CD8-positive, alpha-beta T cell (primary cell): ENCODE measurements at regions of chr4 and their contacts with region 1.

Region 1: GRCh38 chr4:83284193-83285054 is at the start of gene COQ2:
- DNase-seq: peak; percentile 90 to 97 (median 95)
- ATAC-seq: peak; percentile 89
- H3K4me3 ChIP-seq: peak within 1 kb of the TSS; percentile 56 to 78
- H3K4me3 Mint-ChIP-seq: peak within 1 kb of the TSS; percentile 97
- H3K27ac ChIP-seq: peak within 1 kb of the TSS; percentile 71 to 84
- H3K27ac Mint-ChIP-seq: peak within 1 kb of the TSS; percentile 98
- H3K4me1 ChIP-seq: peaks cover 17% of the 10 kb centered on the region
- H3K4me1 Mint-ChIP-seq: peaks cover 35% of the 10 kb centered on the region
- H3K27me3 ChIP-seq: no peaks in the 10 kb centered on the region
- H3K27me3 Mint-ChIP-seq: no peaks in the 10 kb centered on the region
- CTCF ChIP-seq: no peak
- total RNA-seq, gene COQ2: 9.0 to 9.8 TPM

Region 2: DNA sequence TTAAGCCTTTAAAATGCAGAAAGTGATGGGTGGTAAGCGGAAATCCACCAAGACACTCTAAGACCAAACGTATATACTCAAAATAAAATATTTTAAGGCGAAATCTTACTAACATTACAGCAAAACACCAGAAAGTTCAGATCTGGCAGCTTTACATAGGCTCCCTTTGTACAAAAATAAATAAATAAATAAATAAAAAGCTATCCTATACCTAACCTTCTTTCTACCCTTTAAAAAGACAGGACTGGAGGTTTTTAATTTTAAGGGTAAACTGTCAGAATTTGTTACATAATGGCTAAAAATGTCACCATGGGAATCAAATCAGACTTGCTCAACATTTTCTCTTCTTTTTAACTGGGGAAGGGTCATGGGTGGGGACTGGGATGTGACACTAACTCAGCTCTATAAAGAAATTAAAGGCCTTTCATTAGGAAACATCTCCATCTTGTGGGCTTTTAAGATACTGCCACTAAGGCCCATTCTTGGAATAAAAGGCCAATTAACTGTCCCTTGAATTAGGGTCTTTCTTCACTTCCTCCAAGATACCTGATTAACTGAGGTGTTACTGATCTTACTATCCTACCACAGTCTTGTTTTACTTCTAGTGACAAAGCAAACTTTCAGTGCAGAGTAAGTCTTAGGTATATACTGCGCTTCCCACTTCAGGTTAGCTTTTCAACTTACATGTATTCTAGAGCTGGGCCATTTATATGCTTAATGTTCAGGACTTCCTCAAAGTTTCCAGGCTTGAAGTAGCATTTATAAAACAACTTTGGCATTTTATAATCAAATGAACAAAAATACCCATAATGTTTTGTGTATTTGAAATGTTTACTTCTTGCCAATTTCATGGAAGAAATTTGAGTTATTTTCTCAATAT is 923.9 kb before region 1 on chr4:
- CTCF ChIA-PET with region 1: no interaction called
- POLR2A ChIA-PET with region 1: no interaction called
- intact Hi-C with region 1: loop called in 1 of 2 experiments (anchors 10 kb)
- DNase-seq: peak in 2 of 9 experiments; percentile 51 to 59
- ATAC-seq: peak; percentile 75
- H3K4me3 ChIP-seq: no peak overlapping the region
- H3K4me3 Mint-ChIP-seq: peak overlapping the region; percentile 1
- H3K27ac ChIP-seq: peak overlapping the region in 1 of 2 experiments; percentile 21
- H3K27ac Mint-ChIP-seq: peak overlapping the region; percentile 15
- H3K4me1 ChIP-seq: peaks cover 92% of the 10 kb centered on the region
- H3K4me1 Mint-ChIP-seq: peaks cover 91% of the 10 kb centered on the region
- H3K27me3 ChIP-seq: no peaks in the 10 kb centered on the region
- H3K27me3 Mint-ChIP-seq: no peaks in the 10 kb centered on the region
- CTCF ChIP-seq: peak; percentile 56

Region 3: DNA sequence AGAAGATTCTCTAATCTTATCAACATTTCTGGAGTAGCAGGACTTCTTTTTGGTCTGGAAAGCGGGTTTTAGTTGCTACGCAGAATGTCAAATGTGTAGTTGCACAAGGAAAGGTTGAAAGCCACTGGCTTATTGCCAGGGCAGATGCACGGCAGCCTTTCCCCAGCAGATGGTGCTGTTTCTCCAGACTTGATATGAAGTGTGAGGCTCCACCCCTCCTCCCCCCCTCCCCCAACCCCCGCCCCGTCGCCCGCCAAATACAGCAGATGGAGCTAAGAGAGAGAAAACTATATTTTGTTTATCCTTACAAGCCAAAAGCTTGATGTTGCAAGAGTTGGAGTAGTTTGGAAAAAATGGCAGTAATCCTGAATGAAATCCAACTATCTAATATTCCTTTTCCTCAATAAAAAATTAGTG is 822.0 kb before region 1 on chr4:
- CTCF ChIA-PET with region 1: interaction called, 4 read pairs
- POLR2A ChIA-PET with region 1: no interaction called
- intact Hi-C with region 1: loop called (anchors 5 kb)
- DNase-seq: peak; percentile 68 to 88 (median 84)
- ATAC-seq: peak; percentile 98
- H3K4me3 ChIP-seq: no peak overlapping the region
- H3K4me3 Mint-ChIP-seq: no peak overlapping the region
- H3K27ac ChIP-seq: no peak overlapping the region
- H3K27ac Mint-ChIP-seq: peak overlapping the region; percentile 20
- H3K4me1 ChIP-seq: peaks cover 3% of the 10 kb centered on the region
- H3K4me1 Mint-ChIP-seq: peaks cover 3% of the 10 kb centered on the region
- H3K27me3 ChIP-seq: no peaks in the 10 kb centered on the region
- H3K27me3 Mint-ChIP-seq: no peaks in the 10 kb centered on the region
- CTCF ChIP-seq: peak; percentile 79

Region 4: DNA sequence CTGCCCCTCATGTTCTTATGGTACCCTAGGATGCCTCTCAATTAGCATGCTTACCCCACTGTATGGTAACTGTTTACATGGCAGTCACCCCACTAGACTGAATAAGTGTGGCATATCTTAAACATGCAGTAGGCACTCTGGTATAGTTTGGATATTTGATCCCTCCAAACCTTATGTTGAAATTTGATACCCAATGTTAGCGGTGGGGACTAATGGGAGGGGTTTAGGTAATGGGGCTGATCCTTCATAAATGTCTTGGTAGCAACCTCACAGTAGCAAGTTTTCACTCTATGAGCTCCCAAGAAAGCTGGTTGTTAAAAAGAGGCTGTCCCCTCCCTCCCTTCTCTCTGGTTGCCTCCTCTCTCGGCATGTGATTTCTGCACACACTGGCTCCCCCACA is 732.7 kb before region 1 on chr4:
- CTCF ChIA-PET with region 1: no interaction called
- POLR2A ChIA-PET with region 1: no interaction called
- intact Hi-C with region 1: no loop called
- DNase-seq: no peak
- ATAC-seq: no peak
- H3K4me3 ChIP-seq: no peak overlapping the region
- H3K4me3 Mint-ChIP-seq: no peak overlapping the region
- H3K27ac ChIP-seq: no peak overlapping the region
- H3K27ac Mint-ChIP-seq: no peak overlapping the region
- H3K4me1 ChIP-seq: no peaks in the 10 kb centered on the region
- H3K4me1 Mint-ChIP-seq: no peaks in the 10 kb centered on the region
- H3K27me3 ChIP-seq: no peaks in the 10 kb centered on the region
- H3K27me3 Mint-ChIP-seq: peaks cover 18% of the 10 kb centered on the region
- CTCF ChIP-seq: no peak

Region 5: GRCh38 chr4:82900331-82901128 is 383.9 kb before region 1 on chr4 and contains the start of gene THAP9:
- CTCF ChIA-PET with region 1: interaction called, 3 read pairs
- POLR2A ChIA-PET with region 1: interaction called, 3 read pairs
- intact Hi-C with region 1: loop called in 1 of 2 experiments (anchors 5 kb)
- DNase-seq: peak; percentile 95 to 100 (median 97)
- ATAC-seq: peak; percentile 88
- H3K4me3 ChIP-seq: peak within 1 kb of the TSS; percentile 73 to 84
- H3K4me3 Mint-ChIP-seq: no peak within 1 kb of the TSS
- H3K27ac ChIP-seq: peak within 1 kb of the TSS; percentile 93 to 99
- H3K27ac Mint-ChIP-seq: no peak within 1 kb of the TSS
- H3K4me1 ChIP-seq: peaks cover 30% of the 10 kb centered on the region
- H3K4me1 Mint-ChIP-seq: peaks cover 21% of the 10 kb centered on the region
- H3K27me3 ChIP-seq: no peaks in the 10 kb centered on the region
- H3K27me3 Mint-ChIP-seq: no peaks in the 10 kb centered on the region
- CTCF ChIP-seq: no peak
- total RNA-seq, gene THAP9: 5.2 to 7.3 TPM

Region 6: DNA sequence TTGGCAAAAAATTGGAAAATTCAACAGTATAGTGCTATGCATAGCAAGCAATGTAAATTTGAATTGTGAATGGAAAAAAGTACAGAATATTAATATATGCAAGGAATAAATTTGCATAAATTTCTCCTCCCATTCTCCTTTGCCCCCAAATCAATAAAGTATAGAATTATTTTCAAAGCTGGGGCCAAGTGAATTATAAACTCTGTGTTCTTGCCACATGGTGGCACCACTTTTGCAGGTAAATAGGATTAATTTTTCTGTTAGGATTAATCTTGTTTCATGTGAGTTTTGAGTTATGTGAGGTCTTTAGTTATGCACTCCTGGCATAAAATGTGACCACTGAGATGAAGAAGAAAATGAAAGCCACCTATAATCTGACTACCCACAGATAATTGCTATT is 229.5 kb before region 1 on chr4:
- CTCF ChIA-PET with region 1: interaction called, 3 read pairs
- POLR2A ChIA-PET with region 1: no interaction called
- intact Hi-C with region 1: loop called in 1 of 2 experiments (anchors 1 kb)
- DNase-seq: peak in 2 of 9 experiments; percentile 35 to 54
- ATAC-seq: no peak
- H3K4me3 ChIP-seq: no peak overlapping the region
- H3K4me3 Mint-ChIP-seq: no peak overlapping the region
- H3K27ac ChIP-seq: no peak overlapping the region
- H3K27ac Mint-ChIP-seq: peak overlapping the region; percentile 11
- H3K4me1 ChIP-seq: no peaks in the 10 kb centered on the region
- H3K4me1 Mint-ChIP-seq: no peaks in the 10 kb centered on the region
- H3K27me3 ChIP-seq: no peaks in the 10 kb centered on the region
- H3K27me3 Mint-ChIP-seq: no peaks in the 10 kb centered on the region
- CTCF ChIP-seq: peak; percentile 61

Region 7: GRCh38 chr4:83259586-83259985 is 24.8 kb before region 1 on chr4:
- CTCF ChIA-PET with region 1: interaction called, 10 read pairs
- POLR2A ChIA-PET with region 1: interaction called, 4 read pairs
- intact Hi-C with region 1: loop called in 1 of 2 experiments (anchors 1 kb)
- DNase-seq: no peak
- ATAC-seq: no peak
- H3K4me3 ChIP-seq: no peak overlapping the region
- H3K4me3 Mint-ChIP-seq: no peak overlapping the region
- H3K27ac ChIP-seq: no peak overlapping the region
- H3K27ac Mint-ChIP-seq: no peak overlapping the region
- H3K4me1 ChIP-seq: peaks cover 6% of the 10 kb centered on the region
- H3K4me1 Mint-ChIP-seq: peaks cover 13% of the 10 kb centered on the region
- H3K27me3 ChIP-seq: no peaks in the 10 kb centered on the region
- H3K27me3 Mint-ChIP-seq: no peaks in the 10 kb centered on the region
- CTCF ChIP-seq: no peak

Region 8: DNA sequence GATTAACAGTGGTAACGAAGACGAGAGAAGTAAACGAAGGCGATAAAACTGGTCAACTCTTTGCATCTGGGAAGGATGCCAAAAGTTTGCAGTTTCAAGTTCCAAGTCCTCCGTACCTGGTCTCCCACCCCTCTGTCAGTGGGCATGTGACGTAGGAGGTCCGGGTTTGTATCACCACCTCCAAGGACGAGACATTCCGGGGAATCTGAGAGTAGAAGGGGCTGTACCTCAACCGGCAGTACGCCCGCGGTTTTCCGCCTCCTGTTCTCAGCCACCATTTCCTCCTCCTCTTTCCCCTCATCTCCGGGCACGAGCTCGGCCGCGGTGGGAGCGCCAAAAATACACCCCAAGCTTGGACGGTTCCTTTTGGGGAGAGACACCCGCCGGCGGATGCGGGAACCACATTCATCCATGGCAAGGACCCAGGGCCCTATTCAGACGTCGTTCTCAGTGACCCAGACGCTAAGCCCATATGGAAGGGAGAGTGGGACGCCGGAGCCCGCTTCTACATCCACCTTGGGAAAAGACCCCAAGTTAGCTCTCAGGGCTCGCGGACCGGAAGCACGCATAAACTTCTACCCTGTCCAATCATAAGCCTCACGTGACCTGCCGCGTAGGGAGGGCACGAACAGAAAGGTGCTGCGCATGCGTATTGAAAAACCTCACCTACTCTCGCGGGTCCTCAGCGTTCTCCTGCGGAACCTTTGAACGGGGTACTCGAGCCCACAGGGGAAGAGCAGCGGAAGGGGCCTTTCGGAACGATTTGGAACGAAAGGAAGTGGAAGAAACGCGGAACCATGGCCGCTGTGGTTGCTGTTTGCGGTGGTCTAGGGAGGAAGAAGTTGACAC is 171.1 kb after region 1 on chr4 and contains the starts of genes HELQ and MRPS18C:
- CTCF ChIA-PET with region 1: interaction called, 3 read pairs
- POLR2A ChIA-PET with region 1: interaction called, 16 read pairs
- intact Hi-C with region 1: loop called (anchors 2 to 5 kb)
- DNase-seq: peak; percentile 89 to 100 (median 92)
- ATAC-seq: peak; percentile 86
- H3K4me3 ChIP-seq: peak within 1 kb of the TSS; percentile 62 to 91
- H3K4me3 Mint-ChIP-seq: peak within 1 kb of the TSS; percentile 100
- H3K27ac ChIP-seq: peak within 1 kb of the TSS; percentile 99
- H3K27ac Mint-ChIP-seq: peak within 1 kb of the TSS; percentile 100
- H3K4me1 ChIP-seq: peaks cover 27% of the 10 kb centered on the region
- H3K4me1 Mint-ChIP-seq: peaks cover 65% of the 10 kb centered on the region
- H3K27me3 ChIP-seq: no peaks in the 10 kb centered on the region
- H3K27me3 Mint-ChIP-seq: no peaks in the 10 kb centered on the region
- CTCF ChIP-seq: no peak
- total RNA-seq, gene HELQ: 25.6 to 28.0 TPM
- total RNA-seq, gene MRPS18C: 17.7 to 24.1 TPM